ENCODE measurements at regions of chr12 and their contacts with region 1.

Region 1: GRCh38 chr12:51270067-51270970 is at the start of gene SMAGP:
- DNase-seq: peak; percentile 64
- ATAC-seq: peak; percentile 76 to 90 (median 86)
- H3K4me3 ChIP-seq: peak within 1 kb of the TSS; percentile 45 to 87 (median 80)
- H3K27ac ChIP-seq: peak within 1 kb of the TSS; percentile 44 to 92 (median 83)
- H3K4me1 ChIP-seq: peaks cover 0 to 28% (median 18%) of the 10 kb centered on the region in 9 donors
- H3K27me3 ChIP-seq: peaks cover 0 to 22% (median 3%) of the 10 kb centered on the region in 7 donors
- CTCF ChIP-seq: peak in 2 of 9 donors; percentile 7 to 31
- total RNA-seq, gene SMAGP: 2.0 to 6.9 (median 3.5) TPM

Region 2: GRCh38 chr12:51234530-51234929 is 35.8 kb before region 1 on chr12:
- intact Hi-C with region 1: no loop called
- DNase-seq: no peak
- ATAC-seq: no peak
- H3K4me3 ChIP-seq: no peak overlapping the region
- H3K27ac ChIP-seq: no peak overlapping the region
- H3K4me1 ChIP-seq: peaks cover 0 to 8% (median 5%) of the 10 kb centered on the region in 9 donors
- H3K27me3 ChIP-seq: no peaks in the 10 kb centered on the region
- CTCF ChIP-seq: no peak

Region 3: DNA sequence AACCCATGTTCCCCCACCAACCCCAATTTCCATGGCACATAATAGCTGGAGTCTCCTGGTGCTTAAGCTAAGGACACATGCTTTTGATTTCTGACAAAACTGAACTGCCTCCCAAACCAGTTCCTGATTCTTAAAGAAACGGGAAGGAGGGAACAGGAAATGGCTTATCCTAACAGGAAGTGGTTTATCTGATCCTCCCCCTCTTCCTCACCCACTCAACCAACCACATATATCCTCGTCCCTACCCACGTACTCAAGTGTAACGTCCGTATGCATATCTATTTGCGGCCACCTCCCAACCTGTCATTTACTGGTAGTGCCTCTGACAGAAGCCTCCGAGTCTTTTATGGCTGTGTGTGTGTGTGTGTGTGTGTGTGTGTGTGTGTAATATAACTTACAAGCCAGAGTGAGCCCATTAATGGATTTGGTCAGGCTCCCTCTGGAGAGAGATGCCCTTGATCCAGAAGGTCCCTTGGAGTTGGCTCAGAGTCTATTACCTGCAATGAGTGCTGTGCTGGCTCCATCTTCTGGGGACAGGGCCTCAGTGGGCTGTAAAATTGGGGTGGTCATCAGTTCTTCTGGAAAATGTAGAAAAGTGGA is 24.0 kb before region 1 on chr12:
- intact Hi-C with region 1: loop called in 1 of 10 experiments (anchors 1 kb)
- DNase-seq: peak in 1 of 2 donors; percentile 29
- ATAC-seq: peak; percentile 54 to 78 (median 65)
- H3K4me3 ChIP-seq: no peak overlapping the region
- H3K27ac ChIP-seq: peak overlapping the region in 4 of 10 donors; percentile 36 to 86 (median 69)
- H3K4me1 ChIP-seq: peaks cover 0 to 65% (median 27%) of the 10 kb centered on the region in 9 donors
- H3K27me3 ChIP-seq: no peaks in the 10 kb centered on the region
- CTCF ChIP-seq: peak in 5 of 9 donors; percentile 8 to 33 (median 28)

Region 4: DNA sequence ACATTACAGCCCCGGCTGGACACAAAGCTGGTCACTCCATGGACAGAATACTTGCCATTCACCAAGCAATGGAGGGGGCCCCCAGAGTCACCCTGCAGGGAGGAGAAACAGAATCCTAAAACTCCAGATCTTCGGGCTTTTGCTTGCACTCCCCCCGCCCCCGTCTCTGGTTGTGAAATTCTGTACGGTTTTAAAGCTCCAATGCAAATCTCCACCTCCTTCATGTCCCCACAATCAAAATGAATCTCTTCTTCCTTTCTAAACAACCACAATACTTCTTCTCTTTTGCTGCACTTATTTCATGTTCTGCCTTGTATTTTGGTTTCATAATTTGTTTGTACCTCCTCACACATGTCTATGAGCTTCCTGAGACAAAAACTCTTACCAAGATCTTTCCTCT is 59.4 kb after region 1 on chr12:
- intact Hi-C with region 1: loop called in 1 of 10 experiments (anchors 10 kb)
- DNase-seq: no peak
- ATAC-seq: no peak
- H3K4me3 ChIP-seq: no peak overlapping the region
- H3K27ac ChIP-seq: peak overlapping the region in 1 of 10 donors; percentile 99
- H3K4me1 ChIP-seq: peaks cover 0 to 58% (median 0%) of the 10 kb centered on the region in 9 donors
- H3K27me3 ChIP-seq: no peaks in the 10 kb centered on the region
- CTCF ChIP-seq: no peak

Region 5: DNA sequence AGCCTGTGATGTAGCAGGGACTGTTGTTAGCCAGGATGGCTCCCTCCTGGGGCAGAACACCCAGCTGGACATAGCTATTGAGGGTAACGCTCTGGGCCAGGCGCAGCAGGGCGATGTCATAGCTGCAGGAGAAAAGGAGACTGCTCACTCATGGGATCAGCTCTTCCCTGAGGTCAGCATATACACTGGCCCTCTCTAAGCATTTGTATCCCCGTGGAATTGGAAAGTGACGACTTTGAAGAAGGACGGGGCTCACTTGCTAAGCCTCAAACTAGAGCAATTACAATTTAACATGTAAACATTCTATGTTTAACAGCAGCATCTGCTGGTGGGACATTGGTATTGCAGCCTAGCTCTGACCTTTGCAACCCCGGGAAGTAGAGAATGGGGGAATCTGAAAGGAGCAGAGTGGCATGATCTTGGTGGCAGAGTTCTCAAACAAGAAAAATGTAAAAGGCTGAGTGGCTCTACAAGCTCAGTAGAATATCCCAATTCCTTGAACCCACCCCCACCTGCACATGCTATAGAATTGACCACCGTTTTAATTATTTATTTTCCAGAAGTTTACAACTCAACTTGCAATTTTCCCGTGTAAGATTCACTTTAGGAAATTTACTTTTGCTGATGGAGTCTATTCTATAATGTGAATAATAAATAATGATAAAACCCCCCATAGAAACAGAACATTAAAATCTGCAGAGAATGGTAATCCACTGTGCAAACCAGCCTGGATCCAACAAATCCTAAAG is 71.1 kb after region 1 on chr12:
- intact Hi-C with region 1: loop called in 8 of 10 experiments (anchors 1 to 10 kb)
- DNase-seq: peak in 1 of 2 donors; percentile 59
- ATAC-seq: peak; percentile 72 to 90 (median 86)
- H3K4me3 ChIP-seq: peak overlapping the region in 5 of 10 donors; percentile 21 to 33 (median 28)
- H3K27ac ChIP-seq: peak overlapping the region in 1 of 10 donors; percentile 56
- H3K4me1 ChIP-seq: peaks cover 0 to 9% (median 4%) of the 10 kb centered on the region in 9 donors
- H3K27me3 ChIP-seq: no peaks in the 10 kb centered on the region
- CTCF ChIP-seq: peak; percentile 84 to 98 (median 97)

Measured in heart right ventricle (tissue), 16 donors.